ENCODE measurements at regions of chr17 and their contacts with region 1.

Region 1: DNA sequence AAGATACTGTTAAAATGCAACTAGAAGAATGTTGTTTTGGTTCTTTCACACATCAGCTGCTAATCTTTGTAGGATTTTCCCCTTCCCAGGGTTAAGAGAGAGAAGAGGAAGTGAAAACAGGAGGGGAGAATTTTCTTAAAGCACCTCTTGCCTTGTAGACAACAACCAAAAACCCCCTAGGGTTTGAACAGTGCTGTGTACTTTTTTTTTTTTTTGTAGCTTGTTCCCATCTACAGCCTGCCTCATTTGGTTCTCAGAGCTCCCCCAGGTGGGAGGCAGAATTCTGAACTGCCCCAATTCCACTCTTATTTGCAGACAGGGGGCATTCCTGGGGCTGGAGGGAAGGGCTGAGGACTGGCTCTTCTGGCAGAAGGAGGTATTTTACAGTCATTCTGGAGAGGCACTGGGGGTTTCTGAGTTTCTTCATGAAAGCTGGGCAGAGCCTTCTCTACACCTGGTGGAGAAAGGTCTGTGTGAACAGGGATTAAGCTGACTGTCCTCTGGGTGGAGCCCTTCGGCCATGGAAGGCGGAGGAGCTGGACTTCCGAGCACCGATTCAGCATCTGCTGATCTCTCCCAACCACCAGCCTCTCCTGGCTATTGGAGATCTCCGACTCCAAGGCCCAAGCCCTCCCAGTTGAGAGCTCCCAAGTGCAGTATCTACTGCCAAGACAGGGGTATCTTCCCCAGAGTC is 32.2 kb downstream of the SMARCE1 start:
- DNase-seq: peak; percentile 58
- ATAC-seq: peak; percentile 83
- H3K4me3 Mint-ChIP-seq: peak overlapping the region; percentile 77
- H3K27ac Mint-ChIP-seq: peak overlapping the region; percentile 96
- H3K4me1 Mint-ChIP-seq: peaks cover 81% of the 10 kb centered on the region
- H3K27me3 Mint-ChIP-seq: no peaks in the 10 kb centered on the region
- CTCF ChIP-seq: no peak

Region 2: DNA sequence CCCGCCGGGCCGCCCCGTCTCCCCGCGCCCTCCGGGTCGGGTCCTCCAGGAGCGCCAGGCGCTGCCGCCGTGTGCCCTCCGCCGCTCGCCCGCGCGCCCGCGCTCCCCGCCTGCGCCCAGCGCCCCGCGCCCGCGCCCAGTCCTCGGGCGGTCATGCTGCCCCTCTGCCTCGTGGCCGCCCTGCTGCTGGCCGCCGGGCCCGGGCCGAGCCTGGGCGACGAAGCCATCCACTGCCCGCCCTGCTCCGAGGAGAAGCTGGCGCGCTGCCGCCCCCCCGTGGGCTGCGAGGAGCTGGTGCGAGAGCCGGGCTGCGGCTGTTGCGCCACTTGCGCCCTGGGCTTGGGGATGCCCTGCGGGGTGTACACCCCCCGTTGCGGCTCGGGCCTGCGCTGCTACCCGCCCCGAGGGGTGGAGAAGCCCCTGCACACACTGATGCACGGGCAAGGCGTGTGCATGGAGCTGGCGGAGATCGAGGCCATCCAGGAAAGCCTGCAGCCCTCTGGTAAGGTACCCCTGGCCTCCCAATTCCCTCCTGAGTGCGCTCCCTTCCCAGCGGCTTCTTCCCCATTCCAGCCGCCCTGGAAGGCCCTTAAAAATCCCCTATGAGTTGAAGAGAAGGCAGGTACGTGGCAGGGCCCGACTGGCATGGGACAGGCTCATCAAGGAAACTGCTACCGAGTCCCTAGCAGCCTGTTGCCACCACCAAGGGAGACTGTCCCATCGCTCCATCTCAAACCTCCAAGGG is 171.7 kb before region 1 on chr17:
- CTCF ChIA-PET with region 1: interaction called, 24 read pairs
- POLR2A ChIA-PET with region 1: interaction called, 37 read pairs
- intact Hi-C with region 1: loop called (anchors 5 kb)
- DNase-seq: peak; percentile 72
- ATAC-seq: peak; percentile 83
- H3K4me3 Mint-ChIP-seq: peak overlapping the region; percentile 81
- H3K27ac Mint-ChIP-seq: peak overlapping the region; percentile 79
- H3K4me1 Mint-ChIP-seq: peaks cover 37% of the 10 kb centered on the region
- H3K27me3 Mint-ChIP-seq: no peaks in the 10 kb centered on the region
- CTCF ChIP-seq: no peak

Region 3: DNA sequence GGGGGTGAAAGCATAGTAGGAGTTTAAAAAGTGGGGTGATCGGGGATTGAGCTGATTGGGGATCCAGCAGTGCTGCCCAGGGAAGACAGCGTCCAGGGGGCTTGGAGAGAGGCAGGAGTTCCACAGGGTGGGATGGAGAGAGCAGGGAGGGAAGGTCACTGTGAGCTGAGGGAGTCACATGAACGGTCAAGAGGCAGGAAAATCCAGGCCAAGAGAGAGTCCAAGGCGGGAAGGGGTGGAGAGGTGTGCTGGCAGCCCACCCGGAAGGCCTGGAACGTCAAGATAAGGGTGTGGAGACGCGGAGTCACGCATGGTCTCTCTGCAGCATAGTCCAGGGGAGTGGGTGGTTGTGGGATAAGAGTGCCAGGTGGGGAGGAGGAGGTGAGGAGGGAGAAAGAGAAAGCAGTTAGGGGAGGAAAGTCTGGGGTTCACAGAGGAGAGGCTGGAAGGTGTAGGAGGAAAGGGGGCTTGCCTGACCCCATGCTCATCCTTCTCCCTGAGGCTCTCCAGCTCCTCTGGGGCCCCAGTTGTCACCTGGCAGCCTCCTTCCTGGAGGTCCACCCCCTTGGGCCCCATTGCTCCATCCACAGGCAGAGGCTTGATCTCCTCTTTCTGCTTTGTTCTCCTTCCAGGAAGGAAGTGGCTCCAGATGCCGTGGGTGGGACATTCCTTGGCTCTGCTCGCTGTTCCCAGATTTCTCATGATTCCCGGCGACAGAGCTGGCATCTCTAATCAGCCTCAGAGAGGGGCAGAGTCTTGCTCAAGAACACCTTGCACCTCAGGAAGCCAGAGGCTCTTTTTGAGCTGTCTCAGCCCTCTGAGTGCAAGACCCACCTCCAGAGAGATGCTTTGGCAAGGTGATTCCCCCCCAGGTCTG is 78.9 kb before region 1 on chr17:
- CTCF ChIA-PET with region 1: interaction called, 64 read pairs
- POLR2A ChIA-PET with region 1: interaction called, 1,885 read pairs
- intact Hi-C with region 1: loop called (anchors 1 kb)
- DNase-seq: peak; percentile 15
- ATAC-seq: no peak
- H3K4me3 Mint-ChIP-seq: no peak overlapping the region
- H3K27ac Mint-ChIP-seq: peak overlapping the region; percentile 59
- H3K4me1 Mint-ChIP-seq: peaks cover 91% of the 10 kb centered on the region
- H3K27me3 Mint-ChIP-seq: no peaks in the 10 kb centered on the region
- CTCF ChIP-seq: no peak

Region 4: GRCh38 chr17:40582328-40582901 is 33.0 kb before region 1 on chr17:
- CTCF ChIA-PET with region 1: interaction called, 24 read pairs
- POLR2A ChIA-PET with region 1: interaction called, 85 read pairs
- intact Hi-C with region 1: loop called (anchors 1 kb)
- DNase-seq: no peak
- ATAC-seq: peak; percentile 55
- H3K4me3 Mint-ChIP-seq: peak overlapping the region; percentile 54
- H3K27ac Mint-ChIP-seq: peak overlapping the region; percentile 87
- H3K4me1 Mint-ChIP-seq: peaks cover 93% of the 10 kb centered on the region
- H3K27me3 Mint-ChIP-seq: no peaks in the 10 kb centered on the region
- CTCF ChIP-seq: no peak

Region 5: DNA sequence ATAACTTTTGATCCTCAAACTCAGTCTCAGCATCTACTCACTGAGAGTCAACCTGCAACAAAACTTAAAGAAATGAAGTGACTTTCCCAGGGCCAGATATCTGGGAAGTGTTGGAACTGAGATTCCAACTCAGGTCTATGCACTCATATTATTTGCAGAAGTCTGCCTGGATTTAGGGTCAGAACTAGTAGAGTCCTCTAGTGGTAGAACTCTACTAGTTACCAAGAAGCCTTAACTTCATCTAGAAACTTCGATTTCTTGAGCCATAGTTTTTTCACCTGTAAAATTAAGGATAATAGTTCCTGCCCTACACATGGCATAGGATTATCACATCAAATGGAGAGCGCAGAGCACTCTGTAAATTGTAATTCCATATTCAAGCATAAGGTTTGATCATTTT is 111.5 kb after region 1 on chr17:
- CTCF ChIA-PET with region 1: interaction called, 6 read pairs
- POLR2A ChIA-PET with region 1: interaction called, 7 read pairs
- intact Hi-C with region 1: loop called (anchors 1 kb)
- DNase-seq: no peak
- ATAC-seq: no peak
- H3K4me3 Mint-ChIP-seq: peak overlapping the region; percentile 12
- H3K27ac Mint-ChIP-seq: peak overlapping the region; percentile 74
- H3K4me1 Mint-ChIP-seq: peaks cover 26% of the 10 kb centered on the region
- H3K27me3 Mint-ChIP-seq: no peaks in the 10 kb centered on the region
- CTCF ChIP-seq: no peak

Region 6: DNA sequence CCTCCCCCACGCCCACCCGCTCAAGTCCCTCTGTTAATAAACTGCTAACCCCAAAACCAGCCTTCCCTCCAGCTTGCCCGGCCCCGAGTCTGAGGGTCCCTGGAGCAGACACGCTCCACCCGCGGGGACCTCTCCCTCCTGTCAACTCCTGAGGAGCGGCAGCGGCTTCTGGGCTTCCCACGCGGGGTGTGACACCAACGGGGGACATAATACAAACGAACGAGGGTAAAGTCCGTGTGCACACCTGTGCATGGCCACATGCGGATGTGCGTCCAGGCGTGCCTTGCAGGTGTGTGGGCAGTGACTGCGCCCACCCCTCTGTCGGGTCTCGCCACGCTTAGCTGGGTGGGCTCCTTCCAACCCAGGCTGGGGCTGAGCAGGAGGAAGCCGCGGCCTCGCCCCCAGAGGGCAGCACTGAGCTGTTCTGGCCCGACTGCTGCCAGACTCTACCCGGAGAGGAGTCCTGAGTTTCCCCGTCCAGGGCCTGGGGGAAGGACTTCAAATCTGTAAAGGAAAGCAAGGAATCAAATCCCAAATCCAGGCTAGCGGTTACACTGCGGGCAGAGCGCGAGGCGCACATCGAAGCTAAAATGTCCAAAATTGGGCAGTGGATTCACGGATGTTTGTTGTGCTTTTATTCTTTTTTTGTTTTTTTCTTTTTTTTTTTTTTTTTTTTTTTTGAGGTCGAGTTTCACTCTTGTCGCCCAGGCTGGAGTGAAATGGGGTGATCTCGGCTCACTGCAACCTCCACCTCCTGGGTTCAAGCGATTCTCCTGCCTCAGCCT is 1033.2 kb after region 1 on chr17:
- CTCF ChIA-PET with region 1: interaction called, 9 read pairs
- POLR2A ChIA-PET with region 1: no interaction called
- intact Hi-C with region 1: loop called (anchors 1 kb)
- DNase-seq: peak; percentile 85
- ATAC-seq: peak; percentile 91
- H3K4me3 Mint-ChIP-seq: peak overlapping the region; percentile 79
- H3K27ac Mint-ChIP-seq: peak overlapping the region; percentile 54
- H3K4me1 Mint-ChIP-seq: peaks cover 10% of the 10 kb centered on the region
- H3K27me3 Mint-ChIP-seq: no peaks in the 10 kb centered on the region
- CTCF ChIP-seq: peak; percentile 88